ENCODE measurements at regions of chr4 and their contacts with region 1.

Region 1: GRCh38 chr4:186191200-186192065 is at the start of gene CYP4V2:
- DNase-seq: peak; percentile 30 to 61
- H3K4me3 ChIP-seq: peak within 1 kb of the TSS; percentile 84 to 99 (median 87)
- H3K27ac ChIP-seq: peak within 1 kb of the TSS; percentile 90 to 99
- H3K4me1 ChIP-seq: peaks cover 0 to 6% of the 10 kb centered on the region in 2 donors
- H3K27me3 ChIP-seq: no peaks in the 10 kb centered on the region
- CTCF ChIP-seq: no peak
- POLR2A ChIP-seq: peak; percentile 43
- total RNA-seq, gene CYP4V2: 28.2 to 40.8 (median 36.6) TPM

Region 2: DNA sequence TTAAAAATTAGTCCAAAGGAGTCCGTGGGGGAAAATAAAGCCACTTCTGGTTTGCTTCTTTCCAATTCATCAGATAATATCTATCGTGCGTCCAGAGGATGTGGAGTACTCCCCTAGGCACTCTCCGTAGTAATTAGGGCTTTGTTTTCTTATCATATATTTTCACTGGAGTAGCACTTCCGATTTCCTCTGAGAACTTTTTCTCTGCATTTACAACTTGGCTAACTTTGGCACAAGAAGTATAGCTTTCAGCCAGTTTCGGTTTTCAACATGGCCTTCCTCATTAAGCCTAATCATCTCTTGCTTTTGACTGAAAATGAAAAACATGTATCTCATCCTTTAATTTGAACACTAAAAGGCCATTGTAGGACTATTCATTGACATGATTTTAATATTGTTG is 1622.7 kb before region 1 on chr4:
- intact Hi-C with region 1: loop called (anchors 10 kb)
- DNase-seq: no peak
- H3K4me3 ChIP-seq: peak overlapping the region in 1 of 3 donors; percentile 52
- H3K27ac ChIP-seq: peak overlapping the region; percentile 9 to 71
- H3K4me1 ChIP-seq: no peaks in the 10 kb centered on the region
- H3K27me3 ChIP-seq: no peaks in the 10 kb centered on the region
- CTCF ChIP-seq: no peak
- POLR2A ChIP-seq: no peak

Region 3: GRCh38 chr4:186144142-186144955 is 47.1 kb before region 1 on chr4:
- intact Hi-C with region 1: no loop called
- DNase-seq: no peak
- H3K4me3 ChIP-seq: peak overlapping the region; percentile 53 to 84 (median 59)
- H3K27ac ChIP-seq: peak overlapping the region; percentile 62 to 92
- H3K4me1 ChIP-seq: no peaks in the 10 kb centered on the region
- H3K27me3 ChIP-seq: no peaks in the 10 kb centered on the region
- CTCF ChIP-seq: no peak
- POLR2A ChIP-seq: no peak

Region 4: GRCh38 chr4:186201535-186202230 is 10.2 kb after region 1 on chr4:
- intact Hi-C with region 1: no loop called
- DNase-seq: no peak
- H3K4me3 ChIP-seq: no peak overlapping the region
- H3K27ac ChIP-seq: peak overlapping the region in 1 of 2 donors; percentile 1
- H3K4me1 ChIP-seq: no peaks in the 10 kb centered on the region
- H3K27me3 ChIP-seq: no peaks in the 10 kb centered on the region
- CTCF ChIP-seq: peak; percentile 47 to 59 (median 54)
- POLR2A ChIP-seq: no peak

Region 5: DNA sequence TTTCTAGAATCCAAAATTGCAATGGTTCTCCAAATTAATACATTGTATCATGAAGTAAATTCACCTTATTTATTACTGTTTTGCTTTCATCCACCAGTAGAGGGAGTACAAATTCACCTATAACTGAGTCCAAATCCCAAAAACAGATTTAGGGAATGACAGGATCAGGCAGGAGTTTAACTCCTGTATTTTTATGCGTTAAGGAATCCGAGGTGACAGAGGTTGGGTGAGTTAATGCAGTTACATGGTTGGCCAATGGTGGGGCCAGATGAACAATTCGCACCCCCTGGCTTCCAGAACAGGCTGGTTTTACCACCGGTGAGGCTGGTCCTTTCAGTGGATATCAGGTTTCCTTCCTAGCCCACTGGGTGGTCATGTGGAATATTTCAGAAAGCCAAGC is 281.5 kb after region 1 on chr4:
- intact Hi-C with region 1: loop called (anchors 5 kb)
- DNase-seq: no peak
- H3K4me3 ChIP-seq: no peak overlapping the region
- H3K27ac ChIP-seq: no peak overlapping the region
- H3K4me1 ChIP-seq: no peaks in the 10 kb centered on the region
- H3K27me3 ChIP-seq: no peaks in the 10 kb centered on the region
- CTCF ChIP-seq: peak; percentile 24 to 43 (median 41)
- POLR2A ChIP-seq: no peak